Prostate gland (tissue), 2 donors: ENCODE measurements at regions of chr3 and their contacts with region 1.

Region 1: DNA sequence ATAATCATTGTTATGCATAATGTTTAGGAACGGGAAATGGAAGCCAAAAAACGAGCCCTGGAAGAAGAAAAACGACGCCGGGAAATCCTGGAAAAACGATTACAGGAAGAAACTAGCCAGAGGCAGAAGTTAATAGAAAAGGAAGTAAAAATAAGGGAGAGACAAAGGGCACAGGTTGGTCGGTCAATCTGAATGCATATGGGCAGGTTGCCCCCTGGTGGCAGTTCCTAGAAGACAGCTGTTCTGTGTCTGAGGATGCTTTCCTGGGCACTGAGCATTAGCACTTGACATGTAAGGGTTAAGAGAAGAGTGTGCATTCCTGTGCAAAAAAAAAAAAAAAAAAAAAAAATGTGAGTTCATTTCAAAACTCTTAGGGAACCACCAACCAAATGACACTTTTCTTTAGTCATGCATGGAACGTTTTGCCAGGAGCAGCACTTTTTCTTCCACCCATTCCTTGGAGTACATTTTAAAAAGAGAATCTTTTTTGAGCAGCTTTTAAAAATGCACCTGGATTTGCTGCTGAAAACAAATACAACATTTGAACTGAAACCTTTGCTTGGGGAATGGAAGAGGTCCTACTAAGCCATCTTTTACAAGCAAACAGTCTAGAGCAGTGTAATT is 11.1 kb upstream of the ABHD10 start:
- DNase-seq: peak; percentile 82
- H3K4me3 ChIP-seq: no peak overlapping the region
- H3K27ac ChIP-seq: no peak overlapping the region
- H3K4me1 ChIP-seq: no peaks in the 10 kb centered on the region
- H3K27me3 ChIP-seq: no peaks in the 10 kb centered on the region
- CTCF ChIP-seq: peak; percentile 82 to 89 (median 86)
- POLR2A ChIP-seq: no peak

Region 2: DNA sequence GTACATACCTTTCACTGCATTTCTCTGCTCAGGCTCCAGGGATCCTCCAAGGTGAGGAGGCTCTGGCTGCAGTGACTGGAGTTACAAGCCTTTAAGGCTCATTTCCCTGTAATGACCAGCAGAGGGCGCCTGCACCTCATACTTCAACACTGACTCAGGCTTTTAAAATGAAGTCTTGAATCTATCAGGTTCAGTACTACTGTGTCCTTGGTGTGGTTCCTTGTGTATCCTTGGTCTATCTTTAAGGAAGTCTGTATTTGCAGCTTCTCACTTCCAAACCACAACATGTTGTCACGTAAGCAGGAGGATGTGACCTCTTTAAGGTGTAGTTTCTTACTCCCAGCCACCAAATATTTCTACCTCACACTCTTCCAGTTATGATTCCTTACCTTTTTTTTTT is 250.2 kb before region 1 on chr3:
- intact Hi-C with region 1: loop called (anchors 2 kb)
- DNase-seq: peak; percentile 86
- H3K4me3 ChIP-seq: no peak overlapping the region
- H3K27ac ChIP-seq: no peak overlapping the region
- H3K4me1 ChIP-seq: no peaks in the 10 kb centered on the region
- H3K27me3 ChIP-seq: no peaks in the 10 kb centered on the region
- CTCF ChIP-seq: peak; percentile 74 to 97 (median 96)
- POLR2A ChIP-seq: no peak

Region 3: GRCh38 chr3:111846717-111847116 is 121.0 kb before region 1 on chr3:
- intact Hi-C with region 1: no loop called
- DNase-seq: no peak
- H3K4me3 ChIP-seq: no peak overlapping the region
- H3K27ac ChIP-seq: no peak overlapping the region
- H3K4me1 ChIP-seq: no peaks in the 10 kb centered on the region
- H3K27me3 ChIP-seq: no peaks in the 10 kb centered on the region
- CTCF ChIP-seq: no peak
- POLR2A ChIP-seq: no peak

Region 4: GRCh38 chr3:112187300-112187699 is 219.5 kb after region 1 on chr3:
- intact Hi-C with region 1: no loop called
- DNase-seq: no peak
- H3K4me3 ChIP-seq: no peak overlapping the region
- H3K27ac ChIP-seq: no peak overlapping the region
- H3K4me1 ChIP-seq: no peaks in the 10 kb centered on the region
- H3K27me3 ChIP-seq: no peaks in the 10 kb centered on the region
- CTCF ChIP-seq: no peak
- POLR2A ChIP-seq: no peak